Caco-2 (cell line): ENCODE measurements at regions of chr5 and their contacts with region 1.

Region 1: GRCh38 chr5:93800988-93801811 is 59.8 kb upstream of the POU5F2 start:
- DNase-seq: peak in 1 of 2 experiments; percentile 55
- H3K4me3 ChIP-seq: no peak overlapping the region
- H3K4me3 Mint-ChIP-seq: no peak overlapping the region
- H3K27ac Mint-ChIP-seq: no peak overlapping the region
- H3K4me1 ChIP-seq: no peaks in the 10 kb centered on the region
- H3K4me1 Mint-ChIP-seq: no peaks in the 10 kb centered on the region
- H3K27me3 ChIP-seq: no peaks in the 10 kb centered on the region
- H3K27me3 Mint-ChIP-seq: no peaks in the 10 kb centered on the region
- CTCF ChIP-seq: peak; percentile 51 to 68

Region 2: GRCh38 chr5:93407454-93407853 is 393.7 kb before region 1 on chr5:
- CTCF ChIA-PET with region 1: no interaction called
- POLR2A ChIA-PET with region 1: no interaction called
- intact Hi-C with region 1: loop called (anchors 10 kb)
- DNase-seq: no peak
- H3K4me3 ChIP-seq: no peak overlapping the region
- H3K4me3 Mint-ChIP-seq: no peak overlapping the region
- H3K27ac Mint-ChIP-seq: no peak overlapping the region
- H3K4me1 ChIP-seq: no peaks in the 10 kb centered on the region
- H3K4me1 Mint-ChIP-seq: no peaks in the 10 kb centered on the region
- H3K27me3 ChIP-seq: no peaks in the 10 kb centered on the region
- H3K27me3 Mint-ChIP-seq: peaks cover 2% of the 10 kb centered on the region
- CTCF ChIP-seq: no peak

Region 3: DNA sequence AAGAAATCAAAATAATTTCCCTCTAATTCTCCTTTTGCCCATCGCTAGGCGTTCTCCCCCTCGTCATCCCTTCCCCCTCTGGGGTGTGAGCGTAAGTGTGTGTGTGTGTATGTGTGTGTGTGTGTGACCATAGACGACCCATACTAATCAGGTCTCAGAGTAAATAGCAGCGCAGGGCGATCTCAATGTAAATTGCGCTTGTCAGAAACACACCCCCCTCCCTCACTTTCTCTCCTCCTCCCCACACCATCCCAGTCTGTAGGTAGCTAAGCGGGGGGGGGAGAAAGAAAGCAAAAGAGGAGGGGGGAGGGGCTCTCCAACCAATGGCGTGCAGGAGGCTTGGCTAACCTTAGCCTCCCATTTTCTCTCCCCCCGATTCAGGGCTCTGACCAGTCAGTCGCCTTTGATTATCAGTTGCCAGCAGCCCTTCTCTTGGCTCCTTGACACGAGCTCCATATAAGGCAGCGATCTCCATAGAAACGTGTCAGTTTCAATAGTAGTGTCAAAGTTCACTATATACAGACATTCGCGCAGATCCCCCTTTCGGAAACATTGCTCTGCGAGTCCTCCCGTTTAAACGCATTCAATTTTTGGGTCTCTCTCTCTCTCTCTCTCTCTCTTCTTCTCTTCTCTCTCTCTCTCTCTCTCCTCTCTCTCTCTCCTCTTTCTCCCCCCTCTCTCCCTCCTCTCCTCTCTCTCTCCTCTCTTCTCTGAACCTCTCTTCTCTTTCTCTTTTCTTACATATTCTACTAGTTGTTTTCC is 218.3 kb before region 1 on chr5 and contains the start of gene NR2F1:
- CTCF ChIA-PET with region 1: interaction called, 3 read pairs
- POLR2A ChIA-PET with region 1: interaction called, 3 read pairs
- intact Hi-C with region 1: loop called (anchors 1 kb)
- DNase-seq: peak; percentile 66 to 84
- H3K4me3 ChIP-seq: peak within 1 kb of the TSS; percentile 31
- H3K4me3 Mint-ChIP-seq: no peak within 1 kb of the TSS
- H3K27ac Mint-ChIP-seq: no peak within 1 kb of the TSS
- H3K4me1 ChIP-seq: no peaks in the 10 kb centered on the region
- H3K4me1 Mint-ChIP-seq: peaks cover 13% of the 10 kb centered on the region
- H3K27me3 ChIP-seq: 0 out of 2 replicates have a peak, but pooled peaks cover 1% of the 10 kb centered on the region
- H3K27me3 Mint-ChIP-seq: peaks cover 14% of the 10 kb centered on the region
- CTCF ChIP-seq: no peak
- total RNA-seq, gene NR2F1: 0.70 and 1.2 TPM in 2 replicates

Region 4: DNA sequence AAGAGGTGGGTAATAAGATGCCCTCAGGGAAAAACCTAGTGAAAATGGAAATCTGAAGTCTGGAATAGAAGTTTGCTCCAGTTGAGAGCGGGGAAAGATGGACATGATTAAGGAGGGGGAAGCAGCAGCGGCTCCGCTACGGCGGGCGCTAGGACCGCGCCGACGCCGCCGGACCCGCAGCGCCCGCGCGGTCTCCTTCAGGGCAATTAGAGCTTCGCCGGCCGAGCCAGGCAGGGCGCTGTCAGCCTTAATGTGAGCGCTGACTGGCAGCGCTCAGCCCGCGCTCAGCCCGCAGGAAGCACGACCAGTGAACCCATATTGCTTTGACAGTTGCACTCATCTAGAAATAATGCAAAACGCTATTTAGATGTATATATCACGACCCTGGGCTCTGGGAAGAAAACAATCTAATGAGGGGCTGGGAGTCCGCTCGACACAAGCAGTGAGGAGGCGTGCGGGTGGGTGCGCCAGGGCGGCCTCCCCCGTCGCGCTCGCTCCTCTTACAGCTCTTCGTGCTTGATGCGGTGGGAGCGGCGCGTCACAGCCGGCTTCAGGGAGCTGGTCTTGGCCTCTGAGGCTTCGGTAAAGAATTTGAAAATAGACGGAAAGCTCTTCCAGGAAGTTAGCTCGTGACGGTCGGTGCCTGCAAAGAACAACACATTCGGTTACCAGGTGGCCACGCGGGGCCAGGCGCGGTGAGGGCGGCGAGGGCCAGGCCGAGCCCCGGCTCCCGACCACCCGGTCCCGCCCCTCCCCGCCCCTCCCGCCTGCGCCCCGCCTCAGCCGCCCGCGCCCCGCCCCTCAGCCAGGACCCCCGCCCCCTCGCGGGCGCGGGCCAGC is 180.5 kb before region 1 on chr5:
- CTCF ChIA-PET with region 1: interaction called, 6 read pairs
- POLR2A ChIA-PET with region 1: no interaction called
- intact Hi-C with region 1: loop called (anchors 5 kb)
- DNase-seq: peak; percentile 69 to 76
- H3K4me3 ChIP-seq: peak overlapping the region; percentile 83
- H3K4me3 Mint-ChIP-seq: peak overlapping the region; percentile 97
- H3K27ac Mint-ChIP-seq: peak overlapping the region; percentile 69
- H3K4me1 ChIP-seq: no peaks in the 10 kb centered on the region
- H3K4me1 Mint-ChIP-seq: peaks cover 12% of the 10 kb centered on the region
- H3K27me3 ChIP-seq: no peaks in the 10 kb centered on the region
- H3K27me3 Mint-ChIP-seq: no peaks in the 10 kb centered on the region
- CTCF ChIP-seq: no peak

Region 5: DNA sequence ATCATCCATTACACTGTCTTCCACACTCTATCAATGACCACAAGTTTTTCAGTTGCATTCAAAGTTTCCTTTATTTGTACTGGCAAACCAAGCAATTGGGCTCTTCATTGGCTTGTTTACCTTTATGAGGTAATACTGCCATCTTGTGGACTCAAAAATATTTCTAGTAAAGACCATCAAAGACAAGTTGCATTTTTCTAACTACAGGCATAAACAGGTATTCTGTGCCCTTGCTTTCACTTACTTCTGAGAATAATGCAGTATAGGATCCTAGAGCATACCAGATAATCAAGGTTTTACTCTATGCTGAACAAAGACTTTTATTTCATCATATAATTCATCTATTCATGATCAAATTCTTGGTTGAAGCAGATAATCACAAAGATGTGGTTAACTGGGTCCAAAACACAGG is 113.9 kb after region 1 on chr5:
- CTCF ChIA-PET with region 1: no interaction called
- POLR2A ChIA-PET with region 1: no interaction called
- intact Hi-C with region 1: loop called (anchors 2 kb)
- DNase-seq: peak in 1 of 2 experiments; percentile 51
- H3K4me3 ChIP-seq: no peak overlapping the region
- H3K4me3 Mint-ChIP-seq: no peak overlapping the region
- H3K27ac Mint-ChIP-seq: no peak overlapping the region
- H3K4me1 ChIP-seq: no peaks in the 10 kb centered on the region
- H3K4me1 Mint-ChIP-seq: no peaks in the 10 kb centered on the region
- H3K27me3 ChIP-seq: no peaks in the 10 kb centered on the region
- H3K27me3 Mint-ChIP-seq: no peaks in the 10 kb centered on the region
- CTCF ChIP-seq: peak; percentile 57 to 61